Activated CD4-positive, alpha-beta memory T cell treated with anti-CD3 and anti-CD28 coated beads for 36 hours (primary cell): ENCODE measurements at regions of chr22 and their contacts with region 1.

Region 1: DNA sequence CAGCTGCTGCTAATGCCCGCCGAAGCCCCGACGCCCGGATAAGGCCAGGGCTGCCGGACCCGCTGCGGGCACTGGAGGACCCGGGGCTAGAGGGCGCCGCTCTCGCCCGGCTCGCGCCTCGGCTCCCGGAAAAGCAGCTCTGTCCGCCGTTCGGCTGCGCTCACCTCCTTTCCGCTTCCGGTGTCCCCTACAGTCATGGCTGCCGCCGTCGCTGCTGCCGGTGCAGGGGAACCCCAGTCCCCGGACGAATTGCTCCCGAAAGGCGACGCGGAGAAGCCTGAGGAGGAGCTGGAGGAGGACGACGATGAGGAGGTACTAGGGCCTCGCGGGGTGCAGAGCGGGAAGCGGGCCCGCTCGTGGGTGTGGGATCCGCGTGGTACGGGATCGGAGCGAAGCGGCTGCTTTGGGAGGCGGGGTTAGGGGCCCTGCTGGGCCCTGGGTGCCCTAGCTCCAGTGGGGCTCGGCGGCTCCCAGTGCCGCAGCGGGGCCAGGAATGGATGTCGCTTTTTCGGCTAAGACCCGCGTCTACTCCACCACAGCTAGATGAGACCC is at the start of gene TOMM22:
- DNase-seq: peak; percentile 90
- H3K4me3 Mint-ChIP-seq: peak within 1 kb of the TSS; percentile 99
- H3K27ac Mint-ChIP-seq: peak within 1 kb of the TSS; percentile 94
- H3K4me1 Mint-ChIP-seq: peaks cover 23% of the 10 kb centered on the region
- H3K27me3 Mint-ChIP-seq: no peaks in the 10 kb centered on the region
- total RNA-seq, gene TOMM22: 122 to 128 TPM

Region 2: DNA sequence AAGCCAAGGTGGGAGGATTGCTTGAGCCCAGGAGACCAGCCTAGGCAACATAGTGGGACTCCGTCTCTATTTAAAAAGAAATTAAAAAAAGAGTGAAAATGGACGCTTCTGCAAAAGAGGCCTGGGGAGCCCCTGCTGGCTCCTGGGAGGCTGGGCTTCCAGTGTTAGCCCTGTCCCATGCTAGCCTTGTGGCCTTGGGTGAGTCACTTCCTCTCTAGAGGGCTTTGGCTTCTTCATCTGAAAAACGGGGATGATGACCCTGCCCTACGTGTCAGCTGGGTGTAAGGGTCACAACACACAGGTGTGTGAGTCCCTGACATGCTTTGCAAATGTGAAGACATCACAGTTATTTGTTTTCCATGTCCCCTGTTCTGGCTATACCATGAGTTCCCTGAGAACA is 58.5 kb before region 1 on chr22:
- CTCF ChIA-PET with region 1: no interaction called
- POLR2A ChIA-PET with region 1: no interaction called
- intact Hi-C with region 1: no loop called
- DNase-seq: peak; percentile 31
- H3K4me3 Mint-ChIP-seq: no peak overlapping the region
- H3K27ac Mint-ChIP-seq: no peak overlapping the region
- H3K4me1 Mint-ChIP-seq: no peaks in the 10 kb centered on the region
- H3K27me3 Mint-ChIP-seq: peaks cover 3% of the 10 kb centered on the region

Region 3: GRCh38 chr22:38656256-38657044 is 25.4 kb before region 1 on chr22 and contains the starts of genes CBY1 and FAM227A:
- CTCF ChIA-PET with region 1: interaction called, 11 read pairs
- POLR2A ChIA-PET with region 1: interaction called, 4 read pairs
- intact Hi-C with region 1: loop called (anchors 2 kb)
- DNase-seq: peak; percentile 88
- H3K4me3 Mint-ChIP-seq: peak within 1 kb of the TSS; percentile 88
- H3K27ac Mint-ChIP-seq: peak within 1 kb of the TSS; percentile 96
- H3K4me1 Mint-ChIP-seq: peaks cover 15% of the 10 kb centered on the region
- H3K27me3 Mint-ChIP-seq: no peaks in the 10 kb centered on the region
- total RNA-seq, gene CBY1: 9.8 to 14.6 TPM
- total RNA-seq, gene FAM227A: 0.36 to 0.88 TPM

Region 4: DNA sequence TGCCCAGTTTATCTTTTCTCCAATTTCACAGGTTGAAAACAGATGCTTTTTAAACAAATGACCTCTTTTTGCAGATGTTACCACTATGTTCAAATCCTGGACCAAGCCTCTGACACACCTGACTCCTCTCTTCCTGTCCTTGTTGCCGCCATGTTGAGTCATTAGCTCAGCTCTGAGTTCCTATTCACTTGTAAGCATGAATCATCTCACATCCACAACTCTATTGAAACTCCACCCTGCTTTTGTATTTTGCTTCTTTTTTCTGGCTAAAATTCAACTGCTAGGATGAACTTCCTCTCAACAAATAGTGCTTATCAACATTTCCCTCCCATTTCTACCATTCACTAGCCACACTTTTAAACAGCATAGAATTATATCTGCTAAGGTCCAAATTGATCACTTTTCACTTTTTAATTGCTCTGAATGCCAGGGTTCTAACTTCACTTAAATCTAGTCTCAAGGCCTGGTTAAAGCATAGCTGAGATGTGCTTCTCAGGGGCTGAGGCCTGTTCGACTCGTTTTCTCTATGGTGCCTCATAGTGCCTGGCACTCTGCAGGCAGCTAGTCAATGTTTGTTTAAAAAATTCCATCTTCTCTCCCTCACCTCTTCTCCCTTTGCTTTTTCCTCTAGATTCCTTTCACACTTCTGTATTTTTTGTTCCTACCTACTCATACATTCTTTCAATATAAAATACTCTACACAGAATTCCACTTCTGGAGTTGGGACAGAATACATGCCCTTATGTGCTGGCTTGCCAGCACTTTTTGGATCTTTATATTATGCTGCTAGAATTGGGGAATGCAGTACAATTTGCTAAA is 15.0 kb after region 1 on chr22:
- CTCF ChIA-PET with region 1: interaction called, 40 read pairs
- POLR2A ChIA-PET with region 1: interaction called, 19 read pairs
- intact Hi-C with region 1: loop called (anchors 1 kb)
- DNase-seq: peak; percentile 70
- H3K4me3 Mint-ChIP-seq: peak overlapping the region; percentile 92
- H3K27ac Mint-ChIP-seq: peak overlapping the region; percentile 98
- H3K4me1 Mint-ChIP-seq: peaks cover 61% of the 10 kb centered on the region
- H3K27me3 Mint-ChIP-seq: peaks cover 1% of the 10 kb centered on the region

Region 5: DNA sequence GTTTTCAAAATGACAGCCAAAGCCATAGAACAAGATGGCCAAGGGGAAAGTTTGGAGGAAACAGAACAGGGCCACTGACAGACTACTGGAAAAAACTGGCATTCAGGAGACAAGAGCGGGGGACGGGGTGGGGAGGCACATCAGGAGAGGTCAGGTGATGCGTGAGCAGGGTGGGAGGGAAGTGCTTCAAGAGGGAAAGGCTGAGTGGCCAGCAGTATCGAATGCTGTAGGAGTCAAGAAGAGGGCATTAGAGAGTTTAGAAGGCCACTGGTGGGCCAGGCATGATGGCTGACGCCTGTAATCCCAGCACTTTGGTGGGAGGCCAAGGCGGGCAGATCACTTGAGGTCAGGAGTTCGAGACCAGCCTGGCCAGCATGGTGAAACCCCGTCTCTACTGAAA is 32.1 kb after region 1 on chr22:
- CTCF ChIA-PET with region 1: no interaction called
- POLR2A ChIA-PET with region 1: no interaction called
- intact Hi-C with region 1: no loop called
- DNase-seq: no peak
- H3K4me3 Mint-ChIP-seq: no peak overlapping the region
- H3K27ac Mint-ChIP-seq: peak overlapping the region; percentile 57
- H3K4me1 Mint-ChIP-seq: peaks cover 48% of the 10 kb centered on the region
- H3K27me3 Mint-ChIP-seq: no peaks in the 10 kb centered on the region

Region 6: GRCh38 chr22:38798496-38798895 is 116.6 kb after region 1 on chr22:
- CTCF ChIA-PET with region 1: no interaction called
- POLR2A ChIA-PET with region 1: no interaction called
- intact Hi-C with region 1: no loop called
- DNase-seq: no peak
- H3K4me3 Mint-ChIP-seq: no peak overlapping the region
- H3K27ac Mint-ChIP-seq: no peak overlapping the region
- H3K4me1 Mint-ChIP-seq: peaks cover 8% of the 10 kb centered on the region
- H3K27me3 Mint-ChIP-seq: peaks cover 23% of the 10 kb centered on the region

Region 7: DNA sequence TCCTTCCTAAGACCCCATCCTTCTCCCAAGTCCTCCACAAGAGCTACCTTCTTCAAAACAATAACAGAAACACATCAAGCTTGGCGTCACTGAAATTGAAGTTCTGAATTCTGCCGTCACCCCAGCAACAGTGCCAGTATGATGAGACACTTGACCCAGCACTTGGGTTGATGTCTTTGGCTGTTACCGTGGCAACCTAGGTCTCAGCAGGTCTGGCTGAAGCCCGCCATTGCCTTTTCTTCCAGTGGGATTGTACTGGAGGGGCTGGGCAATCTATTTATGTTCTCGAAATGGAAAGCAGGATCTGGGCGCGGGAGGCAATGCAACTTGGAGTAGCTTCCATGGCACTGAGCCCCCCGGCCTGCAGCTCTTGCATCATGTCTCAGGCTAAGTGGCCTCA is 138.2 kb after region 1 on chr22:
- CTCF ChIA-PET with region 1: no interaction called
- POLR2A ChIA-PET with region 1: no interaction called
- intact Hi-C with region 1: no loop called
- DNase-seq: no peak
- H3K4me3 Mint-ChIP-seq: no peak overlapping the region
- H3K27ac Mint-ChIP-seq: no peak overlapping the region
- H3K4me1 Mint-ChIP-seq: no peaks in the 10 kb centered on the region
- H3K27me3 Mint-ChIP-seq: no peaks in the 10 kb centered on the region